ENCODE measurements at regions of chr11 and their contacts with region 1.

Region 1: DNA sequence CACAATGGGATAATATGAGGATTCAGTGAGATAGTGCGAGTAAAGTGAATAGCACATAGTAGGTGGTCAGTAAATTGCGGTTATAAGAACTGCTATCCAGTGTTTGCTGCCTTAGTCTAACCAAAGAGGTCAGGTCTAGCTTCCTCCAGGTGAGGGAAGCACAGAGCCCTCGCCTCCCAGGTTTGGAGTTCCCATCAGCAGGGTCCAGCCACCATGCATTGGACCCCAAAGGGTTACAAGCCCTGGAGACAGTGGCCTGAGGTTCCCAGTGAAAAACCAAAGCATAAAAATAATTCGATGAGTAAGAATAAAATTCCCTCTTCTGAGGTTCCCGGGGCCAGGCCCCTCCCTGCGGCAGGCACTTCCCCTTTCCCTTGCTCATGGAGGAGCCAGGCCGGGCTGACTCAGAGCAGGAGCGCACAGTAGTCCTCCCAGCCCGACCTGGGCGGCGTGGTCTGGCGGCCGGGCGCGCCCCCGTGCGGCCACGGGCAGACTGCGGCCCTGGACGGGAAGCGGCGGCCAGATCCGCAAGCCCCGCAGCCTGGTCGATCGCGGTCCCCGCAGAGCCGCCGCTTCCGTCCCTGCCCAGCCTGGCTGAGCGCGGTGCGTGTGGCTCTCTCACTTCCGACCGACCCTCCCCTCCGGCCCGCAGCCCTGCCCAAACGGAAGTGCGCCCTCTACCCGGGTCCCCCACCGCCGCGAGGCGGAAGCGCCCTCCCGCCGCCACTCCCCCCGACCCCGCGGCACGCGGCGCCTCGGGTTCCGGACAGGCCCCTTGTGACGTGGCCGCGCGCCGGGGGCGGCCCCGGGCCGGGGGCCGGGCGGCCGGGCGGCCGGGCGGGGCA is at the start of gene SLC39A13:
- DNase-seq: peak; percentile 95 to 98 (median 96)
- ATAC-seq: peak; percentile 95
- H3K4me3 ChIP-seq: peak within 1 kb of the TSS; percentile 62
- H3K27ac ChIP-seq: peak within 1 kb of the TSS; percentile 98
- H3K4me1 ChIP-seq: peaks cover 28 to 54% of the 10 kb centered on the region in 2 experiments
- H3K27me3 ChIP-seq: no peaks in the 10 kb centered on the region
- CTCF ChIP-seq: peak; percentile 92 to 95 (median 94)
- EP300 ChIP-seq: no peak; the same call in none of the 2 replicates
- POLR2A ChIP-seq: peak; percentile 74
- RAD21 ChIP-seq: peak; percentile 98 to 99
- polyA plus RNA-seq, gene SLC39A13: 0.17 to 0.24 TPM

Region 2: DNA sequence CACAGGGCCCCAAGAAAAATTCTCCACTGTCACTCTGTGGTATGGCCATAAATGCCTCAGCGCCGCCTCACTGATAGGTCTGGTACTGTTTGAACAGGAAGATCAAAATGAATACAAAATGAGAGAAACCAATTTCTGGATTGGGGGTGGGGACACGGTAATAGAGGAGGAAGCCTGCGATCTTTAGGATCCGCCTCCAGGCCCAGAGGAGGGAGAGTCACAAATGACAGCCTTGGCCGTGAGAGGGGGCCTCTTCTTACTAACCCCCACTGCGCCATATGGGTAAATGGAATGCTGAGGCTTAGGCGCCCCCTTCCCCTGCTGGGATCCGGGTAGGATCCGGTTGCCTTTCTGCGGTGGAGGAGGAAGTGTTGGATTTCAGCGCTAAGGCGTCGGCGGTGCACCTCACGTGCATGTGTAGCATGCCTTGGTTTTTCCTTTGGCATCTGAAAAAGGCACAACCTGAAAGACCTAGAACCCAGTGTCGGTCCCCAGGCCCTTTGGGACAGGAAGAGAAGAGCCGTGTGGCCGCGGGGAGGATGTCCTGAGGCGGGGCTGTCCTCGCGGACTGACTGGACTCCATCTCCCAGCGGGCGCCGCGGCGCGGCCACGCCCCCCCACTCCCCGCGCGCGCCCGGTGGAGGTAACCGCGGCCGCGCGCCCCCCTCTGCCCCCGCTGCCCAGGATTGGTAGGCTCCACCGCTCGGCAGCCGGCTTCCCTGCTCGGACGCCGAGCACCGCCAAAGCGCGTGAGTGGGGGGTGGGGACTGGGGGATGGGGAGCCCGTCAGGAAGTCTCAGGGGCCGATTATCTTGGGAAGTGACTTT is 138.8 kb before region 1 on chr11:
- CTCF ChIA-PET with region 1: no interaction called
- POLR2A ChIA-PET with region 1: no interaction called
- in situ Hi-C with region 1: no loop called
- intact Hi-C with region 1: loop called (anchors 1 kb)
- DNase-seq: peak; percentile 90 to 93 (median 91)
- ATAC-seq: peak; percentile 70
- H3K4me3 ChIP-seq: peak overlapping the region; percentile 85
- H3K27ac ChIP-seq: peak overlapping the region; percentile 91
- H3K4me1 ChIP-seq: peaks cover 56 to 57% of the 10 kb centered on the region in 2 experiments
- H3K27me3 ChIP-seq: no peaks in the 10 kb centered on the region
- CTCF ChIP-seq: peak; percentile 31 to 48 (median 39); a peak in 4 of 6 replicates
- EP300 ChIP-seq: no peak
- POLR2A ChIP-seq: peak; percentile 82
- RAD21 ChIP-seq: peak in 1 of 2 experiments; percentile 31; a peak in 1 of 4 replicates

Region 3: DNA sequence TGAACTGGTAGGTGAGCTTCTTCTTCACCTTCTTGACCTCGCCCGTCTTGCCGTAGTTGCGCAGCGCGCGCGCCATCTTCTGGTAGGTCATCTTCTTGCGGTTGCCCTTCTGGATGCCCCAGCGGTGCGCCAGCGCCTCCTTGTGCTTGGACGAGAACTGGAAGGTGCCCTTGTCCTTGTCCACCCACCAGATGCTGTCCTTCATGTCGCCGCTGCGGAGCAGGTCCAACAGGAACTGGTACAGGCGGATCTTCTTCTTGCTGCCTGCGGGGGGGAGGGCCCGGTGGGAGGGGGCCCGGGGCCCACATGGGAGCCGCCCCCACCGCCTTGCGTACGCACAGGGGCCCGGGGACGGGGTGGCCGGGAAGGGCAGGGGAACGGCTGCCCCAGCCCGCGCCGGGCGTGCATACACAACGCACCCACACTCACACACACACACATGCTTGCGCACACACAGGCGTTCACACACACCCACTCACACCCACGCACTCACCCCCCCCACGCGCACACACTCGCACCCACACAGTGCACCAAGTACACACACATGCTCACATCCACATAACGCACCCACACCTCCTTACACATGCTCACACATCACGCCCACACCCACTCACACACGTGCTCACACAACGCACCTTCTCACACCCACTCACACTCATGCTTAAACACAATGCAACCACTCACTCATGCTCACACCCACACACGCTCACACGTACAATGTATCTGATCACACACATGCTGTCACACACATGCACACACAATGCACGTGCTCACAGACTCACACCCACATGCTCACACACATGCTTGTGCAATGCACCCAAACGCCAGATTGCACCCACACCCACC is 52.5 kb before region 1 on chr11:
- CTCF ChIA-PET with region 1: no interaction called
- POLR2A ChIA-PET with region 1: no interaction called
- in situ Hi-C with region 1: no loop called
- intact Hi-C with region 1: loop called (anchors 10 kb)
- DNase-seq: peak; percentile 78 to 96 (median 82)
- ATAC-seq: peak; percentile 96
- H3K4me3 ChIP-seq: no peak overlapping the region
- H3K27ac ChIP-seq: no peak overlapping the region; the same call in 2 of the 3 replicates
- H3K4me1 ChIP-seq: peaks cover 0 to 48% of the 10 kb centered on the region in 2 experiments; a peak in 3 of 5 replicates
- H3K27me3 ChIP-seq: no peaks in the 10 kb centered on the region
- CTCF ChIP-seq: peak; percentile 99 to 100 (median 100)
- EP300 ChIP-seq: no peak
- POLR2A ChIP-seq: no peak
- RAD21 ChIP-seq: peak; percentile 91 to 97

Region 4: DNA sequence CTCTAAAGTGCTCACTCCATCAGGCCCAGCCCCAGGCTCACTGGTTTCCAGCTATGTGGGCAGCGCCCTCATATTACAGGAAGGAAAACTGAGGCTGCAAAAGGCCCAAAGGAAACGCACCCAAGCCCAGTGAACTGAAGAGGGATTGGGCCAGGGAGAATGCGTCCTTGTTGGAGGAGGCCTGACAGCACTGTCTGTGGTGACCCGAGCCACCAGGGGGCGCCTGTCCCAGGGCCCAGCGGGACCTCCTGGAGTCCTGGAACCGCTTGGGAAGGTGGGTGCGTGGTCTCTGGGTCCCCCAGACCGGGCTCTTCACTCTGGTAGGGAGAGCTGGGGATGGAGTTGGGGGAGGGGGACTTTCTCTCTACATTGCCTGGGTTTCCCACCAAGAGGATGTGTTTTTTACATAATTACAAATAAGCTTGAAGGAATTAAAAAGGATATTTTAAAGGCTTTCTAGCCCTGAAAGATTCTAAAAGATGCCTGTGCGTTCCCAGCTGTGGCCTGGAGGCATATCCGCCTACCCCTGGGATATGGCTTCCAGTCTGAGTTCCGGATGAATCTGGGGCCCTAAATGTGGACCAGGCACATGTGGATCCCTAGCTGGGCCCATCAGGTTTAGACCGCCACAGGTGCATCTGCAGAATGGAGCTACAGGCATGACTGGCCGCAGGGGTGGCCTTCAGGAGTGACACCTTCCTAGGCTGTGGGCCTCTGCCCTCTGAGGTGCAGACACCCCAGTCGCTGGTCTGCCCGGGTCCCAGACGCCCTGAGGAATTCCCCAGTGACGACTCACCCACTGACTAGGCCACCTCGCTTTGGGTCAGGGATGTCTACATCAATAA is 33.9 kb before region 1 on chr11:
- CTCF ChIA-PET with region 1: interaction called, 11 read pairs
- POLR2A ChIA-PET with region 1: interaction called, 4 read pairs
- in situ Hi-C with region 1: loop called (anchors 5 kb)
- intact Hi-C with region 1: loop called (anchors 1 kb)
- DNase-seq: peak; percentile 81 to 88 (median 85)
- ATAC-seq: peak; percentile 72
- H3K4me3 ChIP-seq: no peak overlapping the region
- H3K27ac ChIP-seq: no peak overlapping the region
- H3K4me1 ChIP-seq: peaks cover 37 to 54% of the 10 kb centered on the region in 2 experiments
- H3K27me3 ChIP-seq: no peaks in the 10 kb centered on the region
- CTCF ChIP-seq: peak; percentile 86 to 93 (median 93)
- EP300 ChIP-seq: no peak
- POLR2A ChIP-seq: no peak
- RAD21 ChIP-seq: peak; percentile 78 to 88

Region 5: GRCh38 chr11:47426061-47426956 is 18.3 kb after region 1 on chr11 and contains the start of gene PSMC3:
- CTCF ChIA-PET with region 1: no interaction called
- POLR2A ChIA-PET with region 1: interaction called, 12 read pairs
- in situ Hi-C with region 1: no loop called
- intact Hi-C with region 1: no loop called
- DNase-seq: peak; percentile 95 to 98 (median 96)
- ATAC-seq: peak; percentile 98
- H3K4me3 ChIP-seq: peak within 1 kb of the TSS; percentile 88
- H3K27ac ChIP-seq: peak within 1 kb of the TSS; percentile 97
- H3K4me1 ChIP-seq: peaks cover 9 to 19% of the 10 kb centered on the region in 2 experiments; a peak in 4 of 5 replicates
- H3K27me3 ChIP-seq: no peaks in the 10 kb centered on the region
- CTCF ChIP-seq: 0 out of 6 replicates have a peak, but pooled peaks of 1 of the 3 experiments have one; percentile 6
- EP300 ChIP-seq: peak; percentile 99
- POLR2A ChIP-seq: peak; percentile 96
- RAD21 ChIP-seq: 0 out of 4 replicates have a peak, but pooled peaks of 1 of the 2 experiments have one; percentile 13
- polyA plus RNA-seq, gene PSMC3: 44.3 to 98.5 TPM

Region 6: GRCh38 chr11:47443042-47443700 is 35.2 kb after region 1 on chr11:
- CTCF ChIA-PET with region 1: no interaction called
- POLR2A ChIA-PET with region 1: no interaction called
- in situ Hi-C with region 1: no loop called
- intact Hi-C with region 1: no loop called
- DNase-seq: peak in 1 of 4 experiments; percentile 22
- ATAC-seq: peak; percentile 50; the same call in 2 of the 3 replicates
- H3K4me3 ChIP-seq: no peak overlapping the region
- H3K27ac ChIP-seq: no peak overlapping the region
- H3K4me1 ChIP-seq: peaks cover 0 to 10% of the 10 kb centered on the region in 2 experiments; a peak in 2 of 5 replicates
- H3K27me3 ChIP-seq: no peaks in the 10 kb centered on the region
- CTCF ChIP-seq: peak in 1 of 3 experiments; percentile 30; a peak in 2 of 6 replicates
- EP300 ChIP-seq: no peak
- POLR2A ChIP-seq: no peak
- RAD21 ChIP-seq: no peak